ENCODE measurements at regions of chr14 and their contacts with region 1.

Region 1: DNA sequence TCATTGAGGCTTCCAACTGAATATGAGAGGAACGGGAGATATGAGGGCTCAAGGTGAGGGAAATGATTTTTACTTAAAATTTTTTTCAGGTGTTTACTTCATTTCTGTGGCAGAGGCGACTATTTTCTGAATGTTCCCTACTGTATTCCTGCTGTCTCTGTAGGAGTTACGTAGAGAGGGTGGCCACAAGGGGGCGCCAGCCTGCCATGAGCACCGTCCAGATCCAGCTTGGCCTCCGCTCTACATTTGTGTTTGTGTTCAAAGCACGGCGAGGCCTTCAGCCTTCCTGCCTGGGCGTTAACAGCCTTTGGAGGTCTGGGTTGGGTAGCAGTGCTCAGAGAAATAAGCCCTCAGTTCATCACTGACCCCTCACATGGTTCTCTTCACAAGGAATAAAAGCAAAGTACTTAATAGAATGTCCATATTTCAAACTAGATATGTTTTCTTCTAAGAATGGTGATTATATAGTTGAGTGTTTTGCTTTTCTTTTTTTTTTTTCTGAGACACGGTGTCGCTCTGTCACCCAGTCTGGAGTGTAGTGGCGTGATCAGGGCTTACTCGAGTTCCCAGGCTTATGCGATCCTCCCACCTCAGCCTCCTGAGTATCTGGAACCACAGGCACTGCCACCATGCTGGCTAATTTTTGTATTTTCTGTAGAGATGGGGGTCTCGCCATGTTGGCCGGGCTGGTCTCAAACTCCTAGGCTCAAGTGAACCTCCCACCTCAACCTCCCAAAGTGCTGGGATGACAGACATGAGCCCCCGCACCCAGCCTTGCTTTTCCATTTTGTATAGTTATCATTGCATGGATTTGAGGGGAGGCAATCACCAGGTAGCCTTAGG is 22.3 kb downstream of the CKB start:
- DNase-seq: peak; percentile 93
- ATAC-seq: peak; percentile 96
- H3K4me3 ChIP-seq: no peak overlapping the region
- H3K27ac ChIP-seq: no peak overlapping the region
- H3K4me1 ChIP-seq: peaks cover 6% of the 10 kb centered on the region
- H3K27me3 ChIP-seq: no peaks in the 10 kb centered on the region
- CTCF ChIP-seq: peak; percentile 97

Region 2: DNA sequence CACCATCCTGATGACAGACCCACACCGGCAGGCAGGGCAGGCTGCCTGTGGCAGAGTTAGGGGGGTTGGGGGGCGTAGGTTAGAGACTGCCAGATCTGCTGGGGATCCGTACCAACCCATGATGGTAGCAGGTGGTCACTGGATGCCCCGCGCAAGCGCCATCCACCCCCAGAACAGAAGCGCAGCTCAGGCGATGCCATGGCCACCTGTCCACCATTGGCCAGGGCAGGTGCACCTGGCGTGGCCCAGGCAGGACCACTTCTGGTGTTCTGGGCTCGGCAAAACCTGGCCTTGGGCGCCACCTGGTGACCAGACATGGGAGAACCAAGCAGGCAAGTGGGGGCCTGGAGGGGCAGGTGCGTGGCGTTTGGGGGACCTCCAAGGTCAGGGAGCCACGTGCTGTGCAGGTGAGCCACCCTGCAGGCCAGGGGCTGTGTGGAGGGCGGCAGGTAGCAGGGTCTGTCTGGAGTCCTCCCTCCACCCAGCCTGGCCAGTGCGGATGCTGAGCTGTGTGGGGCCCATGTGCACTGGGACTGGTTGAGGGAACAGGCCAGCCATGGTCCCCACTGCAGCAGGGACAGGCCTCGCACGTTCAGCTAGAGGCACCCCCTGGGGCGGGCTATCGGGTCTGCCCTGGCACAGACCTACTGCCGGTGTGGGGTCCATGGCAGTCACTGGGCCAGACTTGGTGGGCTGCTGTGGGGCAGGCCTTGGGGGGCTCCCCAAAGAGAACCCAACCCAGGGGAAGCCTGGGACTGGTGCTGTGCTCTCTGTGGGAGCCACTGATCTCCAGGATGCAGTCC is 46.5 kb after region 1 on chr14:
- intact Hi-C with region 1: loop called (anchors 5 kb)
- DNase-seq: peak; percentile 88
- ATAC-seq: peak; percentile 70
- H3K4me3 ChIP-seq: no peak overlapping the region
- H3K27ac ChIP-seq: no peak overlapping the region
- H3K4me1 ChIP-seq: peaks cover 41% of the 10 kb centered on the region
- H3K27me3 ChIP-seq: no peaks in the 10 kb centered on the region
- CTCF ChIP-seq: peak; percentile 87

Measured in upper lobe of right lung (tissue), 1 donor.